ENCODE measurements at regions of chr10 and their contacts with region 1.

Region 1: DNA sequence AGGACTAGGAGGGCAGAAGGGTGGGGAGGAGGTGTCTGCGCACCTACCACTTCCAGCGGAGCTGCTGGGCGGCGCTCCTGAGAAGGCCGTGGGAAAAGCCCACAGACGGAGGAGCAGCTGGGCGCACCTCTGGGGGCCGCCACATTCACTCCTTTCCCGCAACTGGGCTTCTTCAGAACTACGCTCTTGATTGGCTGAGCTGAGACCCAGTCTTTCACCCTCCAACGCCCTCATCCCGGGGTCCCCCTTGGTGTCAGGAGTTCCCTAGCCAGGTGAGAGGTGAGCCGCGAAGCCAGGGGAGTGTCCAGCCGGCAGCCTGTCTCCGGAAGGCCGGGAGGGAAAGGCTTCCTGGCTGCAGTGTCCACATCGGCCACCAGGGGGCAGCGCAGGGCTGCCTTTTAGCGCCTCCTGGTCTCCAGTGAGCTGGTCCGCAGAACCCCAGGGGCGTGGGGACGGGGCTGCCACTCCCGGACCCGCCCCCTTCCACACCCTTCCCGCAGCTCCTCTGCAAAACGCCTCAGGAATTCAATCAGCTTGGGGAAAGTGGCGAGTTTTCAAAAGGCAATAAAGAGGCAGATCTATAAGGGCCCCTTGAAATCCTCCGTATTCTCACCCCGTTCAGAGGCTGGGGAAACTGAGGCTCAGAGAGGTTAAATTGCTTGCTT is 98.8 kb downstream of the CHST15 start:
- DNase-seq: peak; percentile 82 to 89
- ATAC-seq: peak; percentile 75 to 92 (median 88)
- H3K4me3 ChIP-seq: peak overlapping the region in 5 of 10 donors; percentile 6 to 40 (median 23)
- H3K27ac ChIP-seq: peak overlapping the region in 1 of 10 donors; percentile 84
- H3K4me1 ChIP-seq: peaks cover 0 to 44% (median 17%) of the 10 kb centered on the region in 9 donors
- H3K27me3 ChIP-seq: peaks cover 12 to 63% (median 59%) of the 10 kb centered on the region in 7 donors
- CTCF ChIP-seq: peak; percentile 98 to 100 (median 99)

Region 2: DNA sequence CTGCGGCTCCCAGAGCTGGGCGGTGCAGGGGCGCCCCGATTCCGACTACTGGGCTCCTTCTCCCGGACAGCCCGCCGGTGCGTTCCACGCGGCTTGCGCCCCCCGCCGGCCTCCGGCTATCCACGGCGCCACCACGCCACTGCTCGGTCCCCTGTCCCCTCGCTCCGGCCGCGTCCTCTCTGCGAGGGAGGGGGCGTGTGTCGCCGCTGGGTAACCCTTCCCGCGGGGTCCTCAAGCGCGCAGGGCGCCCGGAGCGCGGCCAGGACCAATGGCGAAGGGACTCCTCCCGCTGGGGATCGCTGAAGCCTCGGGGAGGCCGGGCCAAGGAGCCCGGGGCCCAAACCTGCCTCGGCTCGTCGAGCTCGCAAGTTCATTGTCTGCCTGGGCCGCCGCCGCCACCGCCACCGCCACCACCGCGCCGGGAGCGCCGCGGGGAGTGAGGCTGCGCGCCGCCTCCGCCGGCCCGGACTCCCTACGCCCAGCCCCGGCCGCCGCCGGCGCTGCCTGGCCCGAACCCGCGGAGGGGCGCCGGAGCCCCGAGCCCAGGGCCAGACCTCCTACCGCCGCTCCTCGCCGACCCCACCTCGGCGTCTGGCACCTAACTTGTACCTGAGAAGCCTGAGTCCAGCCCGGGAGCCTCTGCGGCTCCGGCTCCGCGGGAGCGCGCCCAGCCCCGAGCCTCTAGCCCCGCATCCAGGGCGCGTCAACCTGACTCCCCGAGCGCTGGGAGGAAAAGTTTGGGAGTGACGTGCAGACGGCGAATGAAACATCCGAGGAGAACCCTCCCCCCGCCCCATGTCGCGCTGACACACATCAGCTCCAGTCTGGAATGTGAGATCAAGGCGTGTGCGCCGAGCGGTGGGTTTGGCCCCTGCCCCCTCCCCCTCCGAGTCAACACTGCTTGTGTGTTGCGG is 98.6 kb after region 1 on chr10 and contains the start of gene CHST15:
- intact Hi-C with region 1: loop called in 1 of 10 experiments (anchors 5 kb)
- DNase-seq: peak; percentile 35 to 47
- ATAC-seq: peak; percentile 26 to 55 (median 46)
- H3K4me3 ChIP-seq: peak within 1 kb of the TSS; percentile 33 to 81 (median 68)
- H3K27ac ChIP-seq: peak within 1 kb of the TSS; percentile 56 to 97 (median 83)
- H3K4me1 ChIP-seq: peaks cover 0 to 52% (median 30%) of the 10 kb centered on the region in 9 donors
- H3K27me3 ChIP-seq: peaks cover 0 to 59% (median 35%) of the 10 kb centered on the region in 7 donors
- CTCF ChIP-seq: peak in 3 of 9 donors; percentile 27 to 36 (median 30)
- total RNA-seq, gene CHST15: 3.8 to 16.7 (median 5.1) TPM

Region 3: DNA sequence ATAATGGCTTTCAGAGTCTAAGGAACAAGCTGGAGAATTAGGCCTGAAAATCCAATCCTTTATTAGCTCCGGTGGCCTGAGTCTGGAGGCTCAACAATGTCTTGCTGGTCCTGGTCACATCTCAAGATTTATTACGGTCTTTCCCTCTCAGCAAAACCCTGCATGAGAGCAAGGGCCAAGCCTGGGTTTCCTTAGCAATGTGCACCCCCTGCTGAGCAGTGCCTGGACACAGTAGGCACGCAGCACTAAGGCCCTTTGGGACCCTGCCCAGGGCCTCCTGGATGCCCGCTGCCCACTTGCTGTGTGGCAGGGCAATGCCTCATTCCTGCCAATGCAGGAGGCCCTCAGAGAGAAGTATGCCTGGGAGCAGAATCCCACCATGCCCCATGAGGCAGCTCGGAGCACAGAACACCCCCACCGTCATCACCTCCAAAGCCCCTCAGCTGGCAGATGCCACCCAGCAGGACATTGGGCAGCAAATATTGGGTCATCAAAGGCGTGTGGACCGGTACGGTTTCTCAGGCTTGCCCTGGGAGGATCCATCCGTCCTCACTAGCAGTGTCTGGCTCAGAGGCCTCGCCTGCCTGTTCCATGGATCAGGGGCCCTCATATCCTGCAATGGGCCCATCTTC is 267.8 kb after region 1 on chr10:
- intact Hi-C with region 1: loop called in 8 of 10 experiments (anchors 5 to 10 kb)
- DNase-seq: no peak
- ATAC-seq: peak in 4 of 8 donors; percentile 37 to 54 (median 48)
- H3K4me3 ChIP-seq: no peak overlapping the region
- H3K27ac ChIP-seq: no peak overlapping the region
- H3K4me1 ChIP-seq: peaks cover 0 to 9% (median 0%) of the 10 kb centered on the region in 9 donors
- H3K27me3 ChIP-seq: peaks cover 0 to 4% (median 0%) of the 10 kb centered on the region in 7 donors
- CTCF ChIP-seq: peak in 8 of 9 donors; percentile 18 to 54 (median 36)

Region 4: DNA sequence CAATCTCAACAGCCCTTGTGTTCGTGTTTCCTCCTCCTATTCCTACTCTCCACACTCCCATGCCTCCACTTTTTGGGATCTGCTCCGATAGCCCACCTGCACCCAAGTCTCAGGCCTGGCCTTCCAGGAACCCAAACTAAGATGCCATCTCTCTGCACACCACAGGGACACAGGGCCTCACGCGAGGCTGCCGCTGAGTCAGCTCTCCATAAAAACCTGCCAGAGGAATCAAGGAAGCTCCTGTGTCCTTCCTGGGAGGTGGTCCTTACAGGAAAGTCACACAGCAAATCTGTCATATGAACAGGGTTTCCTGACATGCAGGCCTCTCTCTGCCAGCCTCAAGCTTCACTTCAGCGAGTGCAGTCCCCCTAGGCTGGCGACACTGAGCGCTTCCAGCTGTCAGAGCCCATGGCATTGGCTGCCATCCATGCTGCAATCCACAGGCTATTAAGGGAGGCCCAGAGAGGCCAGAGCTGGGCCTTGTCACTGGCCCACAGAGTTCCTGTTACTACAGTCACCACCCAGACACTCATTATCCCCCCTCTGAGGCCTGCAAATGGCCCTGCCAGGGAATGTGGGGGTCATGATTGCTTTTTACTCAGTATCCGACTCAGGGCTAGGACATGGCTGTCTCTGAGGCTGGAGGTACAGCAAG is 272.8 kb after region 1 on chr10:
- intact Hi-C with region 1: loop called in 8 of 10 experiments (anchors 5 to 10 kb)
- DNase-seq: peak; percentile 44 to 57
- ATAC-seq: peak; percentile 23 to 87 (median 76)
- H3K4me3 ChIP-seq: no peak overlapping the region
- H3K27ac ChIP-seq: no peak overlapping the region
- H3K4me1 ChIP-seq: peaks cover 0 to 15% (median 0%) of the 10 kb centered on the region in 9 donors
- H3K27me3 ChIP-seq: no peaks in the 10 kb centered on the region
- CTCF ChIP-seq: no peak

Region 5: GRCh38 chr10:124388823-124389612 is 394.5 kb after region 1 on chr10:
- intact Hi-C with region 1: loop called (anchors 1 to 2 kb)
- DNase-seq: peak; percentile 85 to 93
- ATAC-seq: peak; percentile 97 to 100 (median 99)
- H3K4me3 ChIP-seq: peak overlapping the region; percentile 40 to 72 (median 60)
- H3K27ac ChIP-seq: peak overlapping the region in 3 of 10 donors; percentile 19 to 79 (median 24)
- H3K4me1 ChIP-seq: peaks cover 0 to 12% (median 6%) of the 10 kb centered on the region in 9 donors
- H3K27me3 ChIP-seq: peaks cover 0 to 5% (median 0%) of the 10 kb centered on the region in 7 donors
- CTCF ChIP-seq: peak; percentile 82 to 99 (median 98)